Activated CD8-positive, alpha-beta T cell treated with anti-CD3 and anti-CD28 coated beads, Interleukin-2, amount 10 ng/mL, durations not matched to agents 7 days and 5 days (primary cell): ENCODE measurements at regions of chr15 and their contacts with region 1.

Region 1: GRCh38 chr15:34318277-34319079 is 19.1 kb downstream of the SLC12A6 start:
- DNase-seq: peak; percentile 49
- ATAC-seq: peak; percentile 77
- H3K4me3 Mint-ChIP-seq: peak overlapping the region; percentile 81
- H3K27ac Mint-ChIP-seq: peak overlapping the region; percentile 79
- H3K4me1 Mint-ChIP-seq: peaks cover 43% of the 10 kb centered on the region
- H3K27me3 Mint-ChIP-seq: no peaks in the 10 kb centered on the region

Region 2: GRCh38 chr15:34331809-34332208 is 13.3 kb after region 1 on chr15:
- CTCF ChIA-PET with region 1: interaction called, 30 read pairs
- POLR2A ChIA-PET with region 1: interaction called, 29 read pairs
- DNase-seq: peak; percentile 33
- ATAC-seq: peak; percentile 68
- H3K4me3 Mint-ChIP-seq: peak overlapping the region; percentile 38
- H3K27ac Mint-ChIP-seq: peak overlapping the region; percentile 90
- H3K4me1 Mint-ChIP-seq: peaks cover 77% of the 10 kb centered on the region
- H3K27me3 Mint-ChIP-seq: no peaks in the 10 kb centered on the region

Region 3: GRCh38 chr15:34337557-34338306 is 19.3 kb after region 1 on chr15 and contains the start of gene SLC12A6:
- CTCF ChIA-PET with region 1: interaction called, 11 read pairs
- POLR2A ChIA-PET with region 1: interaction called, 29 read pairs
- DNase-seq: peak; percentile 93
- ATAC-seq: peak; percentile 83
- H3K4me3 Mint-ChIP-seq: peak within 1 kb of the TSS; percentile 97
- H3K27ac Mint-ChIP-seq: peak within 1 kb of the TSS; percentile 97
- H3K4me1 Mint-ChIP-seq: peaks cover 58% of the 10 kb centered on the region
- H3K27me3 Mint-ChIP-seq: no peaks in the 10 kb centered on the region
- total RNA-seq, gene SLC12A6: 24.8 to 25.3 TPM